ENCODE measurements at regions of chr14 and their contacts with region 1.

Region 1: DNA sequence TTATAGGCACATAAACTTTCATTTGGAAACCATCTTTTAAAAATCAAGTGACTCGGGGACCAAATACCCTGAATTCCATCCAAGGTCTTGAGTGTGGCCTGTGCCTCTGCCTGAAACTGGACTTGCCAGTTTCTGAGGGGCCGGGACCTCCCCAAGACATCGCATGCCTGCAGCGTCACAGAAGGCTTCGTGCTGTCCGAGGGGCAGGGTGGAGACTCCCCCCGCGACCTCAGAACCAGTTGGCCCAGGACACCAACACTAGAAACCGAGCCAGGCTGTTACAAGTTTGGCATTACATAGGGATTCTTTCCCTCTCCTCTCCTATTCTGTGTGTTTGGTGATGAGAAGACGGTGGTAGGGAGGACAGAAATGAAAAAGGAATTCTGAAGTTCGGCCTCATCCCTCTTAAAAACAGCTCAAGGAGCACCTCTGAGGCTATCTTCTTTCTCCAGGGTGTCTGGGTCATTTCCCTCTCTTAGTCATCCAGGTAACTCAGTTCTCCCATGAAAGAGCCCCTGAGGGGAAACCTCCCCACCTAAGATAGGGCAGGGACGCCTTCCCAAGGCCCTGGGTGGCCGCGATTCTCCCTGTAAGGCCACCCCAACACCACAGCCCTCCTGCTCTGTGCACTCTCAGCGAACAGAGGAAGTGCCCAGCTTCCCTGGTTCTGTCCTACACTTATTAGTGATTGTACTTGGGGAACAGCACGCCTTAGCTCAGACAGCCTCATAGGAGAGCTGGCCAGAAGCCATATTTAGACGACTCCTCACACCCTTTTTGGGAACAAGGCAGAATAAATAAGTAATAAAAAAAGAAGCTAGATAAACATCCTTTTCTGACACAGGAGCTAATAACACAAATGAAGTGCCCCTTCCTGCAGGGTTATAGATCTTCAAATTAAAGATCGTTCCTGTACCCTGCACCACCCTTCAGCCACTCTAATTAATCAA is 93.8 kb downstream of the BCL11B start:
- DNase-seq: peak in 1 of 5 donors; percentile 43
- H3K4me3 ChIP-seq: no peak overlapping the region
- H3K4me3 Mint-ChIP-seq: peak overlapping the region in 4 of 7 donors; percentile 0 to 75 (median 32)
- H3K27ac ChIP-seq: no peak overlapping the region
- H3K27ac Mint-ChIP-seq: peak overlapping the region; percentile 38 to 98 (median 89)
- H3K4me1 ChIP-seq: peaks cover 51% of the 10 kb centered on the region
- H3K4me1 Mint-ChIP-seq: peaks cover 56 to 68% (median 67%) of the 10 kb centered on the region in 3 donors
- H3K27me3 ChIP-seq: no peaks in the 10 kb centered on the region
- H3K27me3 Mint-ChIP-seq: peaks cover 0 to 2% of the 10 kb centered on the region in 2 donors

Region 2: DNA sequence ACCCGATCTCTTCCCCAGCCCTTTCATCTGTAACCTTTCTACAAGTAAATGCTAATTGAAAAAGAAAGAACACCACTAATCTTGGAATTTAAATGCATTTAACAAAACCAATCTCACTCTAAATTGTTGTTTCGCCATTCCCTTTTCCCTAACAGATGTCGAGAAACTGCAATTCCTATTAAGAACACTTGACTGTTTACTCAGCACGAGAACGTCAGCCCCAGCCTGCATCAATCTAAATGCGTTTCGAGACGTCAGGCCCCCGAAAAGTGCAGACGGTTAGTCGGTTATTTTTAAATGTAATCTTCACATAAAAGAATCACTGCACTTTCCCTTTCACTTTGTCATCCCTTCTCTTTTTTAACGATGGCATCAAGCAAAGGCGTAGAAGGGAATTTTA is 1543.4 kb before region 1 on chr14:
- CTCF ChIA-PET with region 1: no interaction called
- POLR2A ChIA-PET with region 1: no interaction called
- DNase-seq: peak in 2 of 5 donors; percentile 27 to 59
- H3K4me3 ChIP-seq: peak overlapping the region; percentile 42
- H3K4me3 Mint-ChIP-seq: peak overlapping the region; percentile 76 to 87 (median 82)
- H3K27ac ChIP-seq: no peak overlapping the region
- H3K27ac Mint-ChIP-seq: peak overlapping the region; percentile 39 to 84 (median 68)
- H3K4me1 ChIP-seq: peaks cover 24% of the 10 kb centered on the region
- H3K4me1 Mint-ChIP-seq: peaks cover 26 to 55% (median 44%) of the 10 kb centered on the region in 3 donors
- H3K27me3 ChIP-seq: no peaks in the 10 kb centered on the region
- H3K27me3 Mint-ChIP-seq: peaks cover 0 to 2% of the 10 kb centered on the region in 2 donors

Region 3: DNA sequence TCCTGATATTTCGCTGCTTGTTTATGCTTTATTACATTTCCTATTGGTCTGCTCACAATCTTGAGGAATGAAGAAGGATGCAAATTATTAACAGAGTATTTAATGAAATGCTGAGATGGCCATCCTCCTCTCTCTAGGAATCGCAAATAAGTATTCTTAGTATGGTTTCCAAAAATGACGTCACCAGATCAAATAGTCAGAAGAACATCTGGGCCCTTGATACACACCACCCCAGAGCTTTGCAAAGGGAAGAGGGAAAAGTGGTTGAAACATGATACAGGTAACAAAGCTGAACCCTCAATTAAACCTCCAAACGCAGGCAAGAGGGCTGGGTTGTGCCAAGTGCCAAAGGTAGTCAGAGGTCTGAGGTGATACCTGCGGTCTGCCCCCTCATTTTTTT is 13.4 kb before region 1 on chr14:
- CTCF ChIA-PET with region 1: interaction called, 10 read pairs
- POLR2A ChIA-PET with region 1: interaction called, 8 read pairs
- DNase-seq: no peak
- H3K4me3 ChIP-seq: no peak overlapping the region
- H3K4me3 Mint-ChIP-seq: no peak overlapping the region
- H3K27ac ChIP-seq: no peak overlapping the region
- H3K27ac Mint-ChIP-seq: peak overlapping the region in 3 of 8 donors; percentile 58 to 85 (median 60)
- H3K4me1 ChIP-seq: peaks cover 1% of the 10 kb centered on the region
- H3K4me1 Mint-ChIP-seq: peaks cover 34 to 68% (median 54%) of the 10 kb centered on the region in 3 donors
- H3K27me3 ChIP-seq: no peaks in the 10 kb centered on the region
- H3K27me3 Mint-ChIP-seq: peaks cover 0 to 3% of the 10 kb centered on the region in 2 donors

Region 4: GRCh38 chr14:99192028-99192621 is 14.0 kb after region 1 on chr14:
- CTCF ChIA-PET with region 1: interaction called, 11 read pairs
- POLR2A ChIA-PET with region 1: interaction called, 7 read pairs
- DNase-seq: peak in 2 of 5 donors; percentile 59 to 60
- H3K4me3 ChIP-seq: peak overlapping the region; percentile 63
- H3K4me3 Mint-ChIP-seq: peak overlapping the region; percentile 83 to 95 (median 88)
- H3K27ac ChIP-seq: peak overlapping the region; percentile 68
- H3K27ac Mint-ChIP-seq: peak overlapping the region; percentile 94 to 98 (median 96)
- H3K4me1 ChIP-seq: peaks cover 97% of the 10 kb centered on the region
- H3K4me1 Mint-ChIP-seq: peaks cover 93 to 100% (median 98%) of the 10 kb centered on the region in 3 donors
- H3K27me3 ChIP-seq: no peaks in the 10 kb centered on the region
- H3K27me3 Mint-ChIP-seq: peaks cover 0 to 9% of the 10 kb centered on the region in 2 donors

Measured in CD8-positive, alpha-beta memory T cell (primary cell).